ENCODE measurements at regions of chrX and their contacts with region 1.

Region 1: GRCh38 chrX:125150231-125150630 is 169.4 kb upstream of the TEX13C start:
- DNase-seq: peak in 2 of 4 experiments; percentile 7 to 13
- ATAC-seq: peak; percentile 4; the same call in 2 of the 3 replicates
- H3K4me3 ChIP-seq: no peak overlapping the region
- H3K27ac ChIP-seq: no peak overlapping the region
- H3K4me1 ChIP-seq: no peaks in the 10 kb centered on the region; a peak in 2 of 5 replicates
- H3K27me3 ChIP-seq: no peaks in the 10 kb centered on the region
- CTCF ChIP-seq: no peak
- EP300 ChIP-seq: no peak
- POLR2A ChIP-seq: no peak
- RAD21 ChIP-seq: no peak

Region 2: GRCh38 chrX:125198546-125198945 is 48.3 kb after region 1 on chrX:
- CTCF ChIA-PET with region 1: no interaction called
- POLR2A ChIA-PET with region 1: no interaction called
- in situ Hi-C with region 1: no loop called
- intact Hi-C with region 1: loop called (anchors 5 kb)
- DNase-seq: no peak
- ATAC-seq: no peak
- H3K4me3 ChIP-seq: no peak overlapping the region
- H3K27ac ChIP-seq: no peak overlapping the region
- H3K4me1 ChIP-seq: peaks cover 0 to 6% of the 10 kb centered on the region in 2 experiments; a peak in 3 of 5 replicates
- H3K27me3 ChIP-seq: peaks cover 2 to 9% of the 10 kb centered on the region in 2 experiments; a peak in 2 of 5 replicates
- CTCF ChIP-seq: no peak
- EP300 ChIP-seq: no peak
- POLR2A ChIP-seq: no peak
- RAD21 ChIP-seq: no peak

Region 3: GRCh38 chrX:126481916-126482315 is 1331.7 kb after region 1 on chrX:
- CTCF ChIA-PET with region 1: no interaction called
- POLR2A ChIA-PET with region 1: no interaction called
- in situ Hi-C with region 1: no loop called
- intact Hi-C with region 1: no loop called
- DNase-seq: no peak
- ATAC-seq: no peak
- H3K4me3 ChIP-seq: no peak overlapping the region
- H3K27ac ChIP-seq: no peak overlapping the region
- H3K4me1 ChIP-seq: no peaks in the 10 kb centered on the region
- H3K27me3 ChIP-seq: no peaks in the 10 kb centered on the region
- CTCF ChIP-seq: no peak
- EP300 ChIP-seq: no peak
- POLR2A ChIP-seq: no peak
- RAD21 ChIP-seq: no peak

Measured in K562 (cell line).